ENCODE measurements at regions of chr1 and their contacts with region 1.

Region 1: GRCh38 chr1:229227298-229227919 is 43.5 kb upstream of the RAB4A start:
- DNase-seq: peak; percentile 86 to 91 (median 88)
- H3K4me3 ChIP-seq: no peak overlapping the region
- H3K27ac ChIP-seq: no peak overlapping the region
- H3K4me1 ChIP-seq: peaks cover 4 to 14% (median 13%) of the 10 kb centered on the region in 3 donors
- H3K27me3 ChIP-seq: no peaks in the 10 kb centered on the region
- CTCF ChIP-seq: peak; percentile 80

Region 2: GRCh38 chr1:228734881-228735801 is 492.3 kb before region 1 on chr1 and contains the start of gene RHOU:
- intact Hi-C with region 1: loop called (anchors 10 kb)
- DNase-seq: peak; percentile 80 to 92 (median 86)
- H3K4me3 ChIP-seq: peak within 1 kb of the TSS; percentile 40 to 76 (median 71)
- H3K27ac ChIP-seq: peak within 1 kb of the TSS; percentile 77 to 78
- H3K4me1 ChIP-seq: peaks cover 0 to 6% (median 0%) of the 10 kb centered on the region in 3 donors
- H3K27me3 ChIP-seq: no peaks in the 10 kb centered on the region
- CTCF ChIP-seq: peak; percentile 78
- total RNA-seq, gene RHOU: 22.1 TPM

Region 3: DNA sequence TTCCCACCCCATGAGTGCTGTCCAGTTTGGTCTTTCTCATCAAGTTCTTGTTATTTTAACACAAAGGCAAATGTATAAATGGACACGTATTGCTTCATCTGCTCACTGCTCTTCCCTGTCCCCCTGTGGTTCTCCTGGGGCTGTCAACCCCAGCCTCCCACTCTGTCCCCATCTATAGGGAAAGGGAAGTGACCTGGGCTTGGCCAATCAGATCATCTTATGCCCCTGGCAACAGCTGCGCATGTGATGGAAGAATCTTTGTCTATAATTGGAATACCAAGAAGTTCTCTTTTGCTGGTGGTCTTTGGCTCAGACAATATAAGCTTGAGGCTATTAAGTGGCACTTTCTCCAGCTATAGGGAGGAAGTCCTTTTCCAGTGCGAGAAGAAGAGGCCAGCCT is 120.1 kb after region 1 on chr1:
- intact Hi-C with region 1: no loop called
- DNase-seq: no peak
- H3K4me3 ChIP-seq: no peak overlapping the region
- H3K27ac ChIP-seq: no peak overlapping the region
- H3K4me1 ChIP-seq: peaks cover 0 to 2% (median 0%) of the 10 kb centered on the region in 3 donors
- H3K27me3 ChIP-seq: no peaks in the 10 kb centered on the region
- CTCF ChIP-seq: no peak